Mucosa of descending colon (tissue), 3 donors: ENCODE measurements at regions of chr10 and their contacts with region 1.

Region 1: GRCh38 chr10:68897336-68897741 is 3.8 kb upstream of the DDX50 start:
- DNase-seq: peak in 1 of 3 donors; percentile 83
- ATAC-seq: peak; percentile 17
- H3K4me3 ChIP-seq: no peak overlapping the region
- H3K4me1 ChIP-seq: peaks cover 8% of the 10 kb centered on the region
- CTCF ChIP-seq: peak; percentile 30

Region 2: GRCh38 chr10:68792115-68792514 is 105.2 kb before region 1 on chr10:
- intact Hi-C with region 1: loop called (anchors 10 kb)
- DNase-seq: no peak
- ATAC-seq: no peak
- H3K4me3 ChIP-seq: no peak overlapping the region
- H3K4me1 ChIP-seq: no peaks in the 10 kb centered on the region
- CTCF ChIP-seq: no peak